ENCODE measurements at regions of chr13 and their contacts with region 1.

Region 1: DNA sequence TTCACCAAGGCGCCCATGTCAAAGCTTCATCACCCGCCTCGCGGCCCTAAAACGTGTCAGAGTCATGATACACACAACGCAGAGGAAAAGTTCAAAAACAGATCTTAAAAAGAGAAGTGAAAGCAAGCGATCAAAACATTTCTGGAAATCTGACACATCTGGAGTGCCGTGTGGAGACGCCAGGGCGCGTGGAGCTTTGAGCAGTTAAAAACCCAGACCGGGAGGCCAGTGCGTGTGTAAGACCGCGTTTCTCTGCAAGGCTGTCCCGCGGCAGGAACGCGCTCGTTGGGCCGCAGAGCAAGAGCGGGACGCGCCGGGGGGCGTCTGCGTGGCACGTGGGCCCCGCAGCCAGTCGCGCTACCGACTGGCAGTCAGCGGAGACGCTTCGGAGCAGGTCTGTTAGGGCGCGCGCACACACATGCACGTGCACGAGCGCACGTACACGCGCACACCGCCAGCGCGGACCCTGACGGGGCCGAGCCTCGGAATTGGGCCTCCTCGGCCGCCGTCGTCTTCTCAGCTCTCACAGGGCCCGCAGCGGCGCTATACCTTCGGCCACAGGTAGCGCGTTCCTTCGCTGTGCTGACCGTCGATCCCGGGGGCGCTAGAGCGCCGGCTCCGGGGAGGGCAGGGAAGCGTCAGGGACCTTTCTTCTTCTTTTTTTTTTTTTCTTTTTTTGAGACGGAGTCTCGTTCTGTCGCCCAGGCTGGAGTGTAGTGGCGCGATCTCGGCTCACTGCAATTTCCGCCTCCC is 35.8 kb downstream of the RNF6 start:
- DNase-seq: peak; percentile 73 to 82
- H3K4me3 ChIP-seq: peak overlapping the region; percentile 55 to 92 (median 60)
- H3K27ac ChIP-seq: peak overlapping the region; percentile 69 to 84
- H3K4me1 ChIP-seq: no peaks in the 10 kb centered on the region
- H3K27me3 ChIP-seq: no peaks in the 10 kb centered on the region
- CTCF ChIP-seq: peak in 2 of 3 donors; percentile 28 to 56
- POLR2A ChIP-seq: no peak

Region 2: DNA sequence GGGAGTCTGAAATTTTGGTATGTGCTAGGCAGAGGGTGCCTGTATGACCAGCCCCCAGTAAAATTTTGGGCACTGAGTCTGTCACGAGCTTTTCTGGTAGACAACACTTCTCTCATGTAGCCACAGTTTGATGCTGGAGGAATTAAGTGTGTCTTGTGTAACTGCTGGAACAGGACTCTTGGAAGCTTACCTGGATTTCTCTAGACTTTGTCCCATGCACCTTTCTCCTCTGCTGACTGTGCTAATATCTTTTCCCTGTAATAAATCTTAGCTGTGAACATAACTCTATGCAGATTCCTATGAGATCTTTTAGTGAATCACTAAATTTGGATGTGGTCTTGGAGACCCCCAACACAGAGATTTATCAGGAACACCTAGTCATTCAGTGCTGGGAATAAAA is 22.0 kb after region 1 on chr13:
- intact Hi-C with region 1: loop called (anchors 1 kb)
- DNase-seq: no peak
- H3K4me3 ChIP-seq: no peak overlapping the region
- H3K27ac ChIP-seq: no peak overlapping the region
- H3K4me1 ChIP-seq: no peaks in the 10 kb centered on the region
- H3K27me3 ChIP-seq: no peaks in the 10 kb centered on the region
- CTCF ChIP-seq: no peak
- POLR2A ChIP-seq: no peak

Region 3: DNA sequence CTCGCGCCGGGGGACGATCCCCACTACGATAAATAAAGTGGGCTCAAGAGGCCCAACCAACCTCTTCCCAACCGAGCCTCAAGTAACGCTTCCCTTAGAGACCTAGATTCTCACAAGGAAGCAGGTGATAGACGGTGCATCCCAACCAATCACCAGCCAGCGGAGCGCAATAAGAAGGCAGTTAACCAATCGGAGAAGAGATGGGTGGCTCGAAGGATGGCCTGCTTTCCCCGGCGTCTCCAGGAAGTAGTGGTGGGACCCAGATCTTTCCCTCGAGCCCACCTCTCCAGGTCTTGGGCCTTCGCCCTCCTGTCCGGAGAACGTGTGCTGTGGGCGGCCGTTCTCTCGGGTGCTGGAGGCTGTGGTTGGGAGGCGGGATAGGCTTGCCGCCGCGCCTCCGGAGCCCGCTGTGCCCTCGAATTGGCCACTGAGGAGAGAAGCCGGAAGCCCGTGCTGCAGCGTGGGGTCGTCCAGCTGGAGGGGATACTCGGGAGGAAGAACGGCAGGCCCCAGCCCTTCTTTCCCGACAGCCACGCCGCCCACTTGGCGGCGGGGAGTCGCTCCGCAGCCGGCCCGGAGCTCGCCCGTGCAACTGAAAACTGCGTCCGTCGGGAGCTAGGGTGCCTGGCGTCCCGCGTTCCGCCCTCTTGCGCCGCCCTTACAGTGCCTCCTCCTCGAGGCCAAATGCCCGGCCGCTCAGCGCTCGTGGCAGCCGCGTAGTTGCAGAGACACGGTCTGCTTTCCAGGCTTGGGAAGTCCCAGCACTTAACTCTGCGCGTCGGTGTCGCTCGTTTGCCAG is 35.6 kb after region 1 on chr13 and contains the start of gene RNF6:
- intact Hi-C with region 1: no loop called
- DNase-seq: peak; percentile 90 to 95
- H3K4me3 ChIP-seq: peak within 1 kb of the TSS; percentile 83 to 97 (median 86)
- H3K27ac ChIP-seq: peak within 1 kb of the TSS; percentile 93 to 96
- H3K4me1 ChIP-seq: peaks cover 0 to 16% of the 10 kb centered on the region in 2 donors
- H3K27me3 ChIP-seq: peaks cover 0 to 4% of the 10 kb centered on the region in 2 donors
- CTCF ChIP-seq: no peak
- POLR2A ChIP-seq: no peak
- total RNA-seq, gene RNF6: 21.0 to 31.5 (median 27.7) TPM

Region 4: DNA sequence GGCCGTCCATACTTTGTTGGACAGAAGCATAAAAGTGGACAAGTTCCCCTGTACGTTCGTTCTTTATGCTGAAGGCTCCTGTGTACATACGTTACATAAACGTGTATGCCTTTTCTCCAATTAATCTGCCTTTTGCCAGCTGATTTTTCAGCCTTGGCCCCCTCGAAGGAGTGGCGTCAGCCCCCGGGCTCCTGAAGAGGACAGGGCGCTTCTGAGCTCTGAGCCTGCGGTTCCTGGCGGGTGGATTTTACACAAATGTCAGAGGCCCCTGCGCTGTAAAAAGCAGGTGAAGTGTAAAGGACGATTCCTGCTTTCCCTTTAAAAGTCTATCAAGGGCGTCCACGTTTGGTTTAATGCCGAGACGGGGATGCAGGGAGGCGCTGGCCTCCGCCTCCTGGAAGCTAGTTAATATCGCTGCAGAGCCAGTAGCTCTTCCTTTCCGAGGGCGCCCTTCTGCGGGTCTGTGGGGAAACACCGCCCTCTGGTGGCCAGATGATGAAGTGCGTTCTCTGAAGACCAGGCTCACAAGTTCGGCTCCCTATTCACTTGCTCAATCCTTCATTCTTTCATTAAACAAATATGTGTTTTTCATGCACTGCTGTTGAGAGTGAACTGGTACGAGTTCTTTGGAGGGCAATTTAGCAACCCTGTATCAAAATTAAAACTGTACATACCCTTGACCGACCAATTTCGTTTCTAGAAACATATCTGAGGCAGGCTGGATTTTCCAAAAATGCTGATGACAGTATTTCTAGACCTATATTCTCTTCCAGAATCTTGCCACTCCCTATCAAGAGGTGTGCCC is 512.3 kb after region 1 on chr13:
- intact Hi-C with region 1: loop called (anchors 10 kb)
- DNase-seq: peak; percentile 73 to 89
- H3K4me3 ChIP-seq: peak overlapping the region; percentile 15 to 49 (median 15)
- H3K27ac ChIP-seq: no peak overlapping the region
- H3K4me1 ChIP-seq: no peaks in the 10 kb centered on the region
- H3K27me3 ChIP-seq: no peaks in the 10 kb centered on the region
- CTCF ChIP-seq: peak; percentile 84 to 96 (median 96)
- POLR2A ChIP-seq: no peak